Dorsolateral prefrontal cortex (tissue), 120 donors: ENCODE measurements at regions of chr19 and their contacts with region 1.

Region 1: GRCh38 chr19:42219812-42220750 is at the start of gene ZNF526:
- DNase-seq: peak; percentile 95 to 99 (median 97)
- H3K4me3 ChIP-seq: peak within 1 kb of the TSS; percentile 63 to 100 (median 91)
- H3K27ac ChIP-seq: peak within 1 kb of the TSS in 57 of 59 donors; percentile 36 to 100 (median 85)
- H3K27me3 ChIP-seq: no peaks in the 10 kb centered on the region
- CTCF ChIP-seq: peak in 26 of 56 donors; percentile 4 to 52 (median 20)
- total RNA-seq, gene ZNF526: 5.3 to 12.0 (median 7.5) TPM

Region 2: GRCh38 chr19:42176990-42177685 is 42.9 kb before region 1 on chr19:
- intact Hi-C with region 1: loop called in 1 of 2 experiments (anchors 5 kb)
- DNase-seq: peak; percentile 55 to 90 (median 79)
- H3K4me3 ChIP-seq: peak overlapping the region; percentile 19 to 73 (median 60)
- H3K27ac ChIP-seq: peak overlapping the region in 55 of 59 donors; percentile 8 to 91 (median 72)
- H3K27me3 ChIP-seq: peaks cover 0 to 30% (median 3%) of the 10 kb centered on the region in 45 donors
- CTCF ChIP-seq: peak in 49 of 56 donors; percentile 7 to 73 (median 44)